K562 (cell line): ENCODE measurements at regions of chr21 and their contacts with region 1.

Region 1: GRCh38 chr21:37642493-37642892 is 273.8 kb downstream of the KCNJ6 start:
- DNase-seq: peak; percentile 60 to 74 (median 67)
- ATAC-seq: peak; percentile 95
- H3K4me3 ChIP-seq: no peak overlapping the region
- H3K27ac ChIP-seq: no peak overlapping the region
- H3K4me1 ChIP-seq: peaks cover 4 to 5% of the 10 kb centered on the region in 2 experiments; a peak in 2 of 5 replicates
- H3K27me3 ChIP-seq: peaks cover 18 to 23% of the 10 kb centered on the region in 2 experiments
- CTCF ChIP-seq: peak; percentile 61 to 79 (median 73)
- EP300 ChIP-seq: no peak
- POLR2A ChIP-seq: no peak
- RAD21 ChIP-seq: peak; percentile 80 to 90

Region 2: DNA sequence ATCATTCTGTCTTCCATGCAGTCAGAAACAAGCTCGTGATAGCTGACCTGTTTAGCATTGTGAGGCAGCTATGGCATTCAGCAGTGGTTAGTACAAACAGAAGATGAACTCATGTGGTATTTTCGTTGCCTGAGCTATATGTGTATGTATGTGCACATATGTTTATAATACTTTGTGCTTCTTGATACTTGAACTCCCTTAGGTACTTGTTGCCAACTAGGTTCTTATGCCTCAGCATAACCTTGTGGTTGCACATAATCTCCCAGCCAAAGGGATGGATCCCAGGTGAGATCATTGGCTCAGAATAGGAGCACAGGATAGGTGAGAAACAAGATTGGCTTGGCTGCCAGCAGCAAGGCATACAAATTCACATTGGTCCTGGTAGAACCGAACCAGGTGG is 461.4 kb before region 1 on chr21:
- CTCF ChIA-PET with region 1: no interaction called
- POLR2A ChIA-PET with region 1: no interaction called
- in situ Hi-C with region 1: no loop called
- intact Hi-C with region 1: loop called (anchors 10 kb)
- DNase-seq: no peak
- ATAC-seq: no peak
- H3K4me3 ChIP-seq: no peak overlapping the region
- H3K27ac ChIP-seq: no peak overlapping the region
- H3K4me1 ChIP-seq: no peaks in the 10 kb centered on the region
- H3K27me3 ChIP-seq: no peaks in the 10 kb centered on the region
- CTCF ChIP-seq: no peak
- EP300 ChIP-seq: no peak
- POLR2A ChIP-seq: no peak
- RAD21 ChIP-seq: no peak

Region 3: GRCh38 chr21:37525810-37526209 is 116.7 kb before region 1 on chr21:
- CTCF ChIA-PET with region 1: no interaction called
- POLR2A ChIA-PET with region 1: no interaction called
- in situ Hi-C with region 1: no loop called
- intact Hi-C with region 1: loop called (anchors 1 kb)
- DNase-seq: no peak
- ATAC-seq: no peak
- H3K4me3 ChIP-seq: no peak overlapping the region
- H3K27ac ChIP-seq: no peak overlapping the region
- H3K4me1 ChIP-seq: peaks cover 1 to 3% of the 10 kb centered on the region in 2 experiments; a peak in 3 of 5 replicates
- H3K27me3 ChIP-seq: no peaks in the 10 kb centered on the region
- CTCF ChIP-seq: no peak
- EP300 ChIP-seq: no peak
- POLR2A ChIP-seq: no peak
- RAD21 ChIP-seq: no peak

Region 4: DNA sequence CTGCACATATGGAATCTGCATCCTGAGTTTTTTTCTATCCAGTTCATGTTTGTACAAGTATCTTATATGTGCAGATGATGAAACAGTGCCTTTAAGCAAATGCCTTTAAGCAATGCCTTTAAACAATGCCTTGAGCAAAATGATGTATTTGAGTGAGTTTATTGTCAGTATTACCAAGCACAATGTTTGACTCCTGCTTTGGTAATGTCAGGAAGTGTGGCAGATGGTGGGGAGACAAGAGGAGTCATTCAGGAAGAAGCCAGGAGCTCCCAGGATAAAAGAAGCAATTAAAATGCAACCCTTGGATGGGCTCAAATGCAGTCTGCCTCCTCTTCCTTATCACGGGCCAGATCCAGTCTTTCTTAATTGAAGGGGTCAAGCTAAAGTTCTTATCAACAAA is 505.6 kb after region 1 on chr21:
- CTCF ChIA-PET with region 1: no interaction called
- POLR2A ChIA-PET with region 1: no interaction called
- in situ Hi-C with region 1: no loop called
- intact Hi-C with region 1: no loop called
- DNase-seq: no peak
- ATAC-seq: no peak
- H3K4me3 ChIP-seq: no peak overlapping the region
- H3K27ac ChIP-seq: no peak overlapping the region
- H3K4me1 ChIP-seq: no peaks in the 10 kb centered on the region
- H3K27me3 ChIP-seq: no peaks in the 10 kb centered on the region
- CTCF ChIP-seq: no peak
- EP300 ChIP-seq: no peak
- POLR2A ChIP-seq: no peak
- RAD21 ChIP-seq: no peak